Left colon (tissue), 2 donors: ENCODE measurements at regions of chr10 and their contacts with region 1.

Region 1: GRCh38 chr10:111756217-111757061 is 427.1 kb downstream of the GPAM start:
- DNase-seq: peak in 1 of 2 donors; percentile 20
- ATAC-seq: peak; percentile 34

Region 2: DNA sequence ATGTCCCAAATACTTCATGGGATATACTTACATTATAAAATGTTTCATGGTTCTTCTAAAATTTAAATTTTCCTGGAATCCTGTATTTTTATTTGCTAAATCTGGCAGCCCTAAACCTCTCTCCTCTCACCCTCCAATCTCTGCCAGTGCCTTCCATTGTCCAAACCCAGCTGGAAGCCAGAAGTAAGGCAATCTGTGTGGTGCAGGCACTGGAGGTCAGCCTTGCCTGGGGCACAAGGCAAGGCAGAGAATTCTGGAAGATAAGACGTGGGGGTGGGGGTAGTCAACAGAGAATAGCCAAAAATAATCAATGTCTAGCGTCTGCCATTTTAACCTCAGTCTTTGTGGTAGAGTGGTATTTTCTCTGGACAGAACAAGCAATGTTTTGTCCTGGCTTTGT is 45.4 kb after region 1 on chr10:
- intact Hi-C with region 1: no loop called
- DNase-seq: no peak
- ATAC-seq: no peak

Region 3: GRCh38 chr10:112137154-112137987 is 380.9 kb after region 1 on chr10:
- intact Hi-C with region 1: loop called in 1 of 2 experiments (anchors 5 kb)
- DNase-seq: peak; percentile 37 to 78
- ATAC-seq: peak; percentile 79